HEK293 (cell line): ENCODE measurements at regions of chr9 and their contacts with region 1.

Region 1: GRCh38 chr9:70111042-70111602 is 67.5 kb downstream of the MAMDC2 start:
- H3K4me3 ChIP-seq: no peak overlapping the region
- H3K27ac ChIP-seq: no peak overlapping the region
- H3K4me1 ChIP-seq: no peaks in the 10 kb centered on the region
- CTCF ChIP-seq: peak; percentile 48; the same call in 1 of the 2 replicates

Region 2: GRCh38 chr9:69421908-69422801 is 689.0 kb before region 1 on chr9:
- CTCF ChIA-PET with region 1: interaction called, 11 read pairs
- POLR2A ChIA-PET with region 1: no interaction called
- H3K4me3 ChIP-seq: no peak overlapping the region
- H3K27ac ChIP-seq: no peak overlapping the region
- H3K4me1 ChIP-seq: no peaks in the 10 kb centered on the region
- CTCF ChIP-seq: peak; percentile 81

Region 3: GRCh38 chr9:69885474-69885929 is 225.6 kb before region 1 on chr9:
- CTCF ChIA-PET with region 1: no interaction called
- POLR2A ChIA-PET with region 1: no interaction called
- H3K4me3 ChIP-seq: no peak overlapping the region
- H3K27ac ChIP-seq: no peak overlapping the region
- H3K4me1 ChIP-seq: no peaks in the 10 kb centered on the region
- CTCF ChIP-seq: no peak

Region 4: DNA sequence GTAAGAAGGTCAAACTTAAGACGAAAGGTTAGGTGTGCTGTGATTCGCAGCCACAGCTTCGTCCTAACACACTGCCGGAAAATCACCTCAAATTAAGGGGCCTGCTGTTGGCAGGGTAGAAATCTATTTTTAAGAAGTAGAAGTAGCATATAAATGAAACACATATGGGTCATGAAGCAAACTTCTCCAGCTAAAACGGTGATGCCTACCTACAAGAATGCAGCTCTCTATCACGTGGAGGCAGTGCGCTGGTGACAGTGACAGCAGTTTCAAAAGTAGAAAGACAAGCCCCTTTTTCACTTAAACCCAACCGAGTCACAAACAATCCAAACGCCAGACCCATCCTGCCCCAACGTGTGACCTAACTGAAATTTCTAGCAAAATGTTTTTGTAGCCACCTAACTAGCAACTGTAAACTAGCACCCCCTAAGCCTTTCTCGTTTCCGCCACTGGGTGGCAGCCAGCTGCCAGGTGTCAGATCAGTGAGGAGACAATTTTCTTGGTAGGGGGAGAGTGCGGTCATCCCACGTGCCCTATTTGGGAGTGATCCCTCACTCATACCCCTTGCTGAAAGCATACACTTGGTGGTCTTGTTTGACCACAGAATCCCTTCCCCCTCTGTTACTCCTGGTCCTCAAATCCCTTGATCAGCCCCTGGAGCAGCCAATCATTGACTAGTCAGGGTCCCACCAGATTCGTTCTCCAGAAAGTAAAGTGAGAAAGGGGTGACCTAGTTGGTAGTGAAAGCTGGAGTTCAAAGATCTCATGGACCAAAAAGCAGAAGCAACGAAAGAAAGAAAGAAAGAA is 139.3 kb before region 1 on chr9:
- CTCF ChIA-PET with region 1: interaction called, 484 read pairs
- POLR2A ChIA-PET with region 1: interaction called, 15 read pairs
- H3K4me3 ChIP-seq: no peak overlapping the region
- H3K27ac ChIP-seq: no peak overlapping the region
- H3K4me1 ChIP-seq: no peaks in the 10 kb centered on the region
- CTCF ChIP-seq: peak; percentile 55; the same call in 1 of the 2 replicates

Region 5: DNA sequence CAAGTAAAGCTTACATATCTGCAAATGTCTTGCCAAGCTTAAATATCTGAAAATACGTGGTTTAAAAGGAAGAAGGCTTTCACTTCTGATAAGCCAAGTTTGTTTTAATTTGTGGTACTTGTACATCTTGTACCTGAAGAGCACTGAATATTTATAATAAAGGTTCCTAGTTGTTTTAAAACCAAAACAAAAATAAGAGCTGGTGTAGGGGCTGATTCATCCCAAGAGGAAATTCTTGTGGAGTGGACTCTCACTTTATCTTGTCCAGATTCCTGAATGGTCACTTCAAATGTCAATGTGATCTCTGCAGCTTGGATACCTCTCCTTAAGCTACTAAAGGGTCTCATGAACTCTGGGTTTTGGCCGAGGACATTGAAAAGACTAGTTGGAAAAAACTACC is 37.9 kb before region 1 on chr9:
- CTCF ChIA-PET with region 1: interaction called, 13 read pairs
- POLR2A ChIA-PET with region 1: no interaction called
- H3K4me3 ChIP-seq: no peak overlapping the region
- H3K27ac ChIP-seq: no peak overlapping the region
- H3K4me1 ChIP-seq: no peaks in the 10 kb centered on the region
- CTCF ChIP-seq: no peak

Region 6: GRCh38 chr9:70127540-70128416 is 16.7 kb after region 1 on chr9:
- CTCF ChIA-PET with region 1: interaction called, 54 read pairs
- POLR2A ChIA-PET with region 1: no interaction called
- H3K4me3 ChIP-seq: no peak overlapping the region
- H3K27ac ChIP-seq: no peak overlapping the region
- H3K4me1 ChIP-seq: no peaks in the 10 kb centered on the region
- CTCF ChIP-seq: no peak

Region 7: GRCh38 chr9:70229579-70229978 is 118.5 kb after region 1 on chr9:
- CTCF ChIA-PET with region 1: interaction called, 58 read pairs
- POLR2A ChIA-PET with region 1: no interaction called
- H3K4me3 ChIP-seq: no peak overlapping the region
- H3K27ac ChIP-seq: no peak overlapping the region
- H3K4me1 ChIP-seq: no peaks in the 10 kb centered on the region
- CTCF ChIP-seq: no peak